Endothelial cell of umbilical vein (primary cell): ENCODE measurements at regions of chr11 and their contacts with region 1.

Region 1: GRCh38 chr11:65569973-65570918 is at the start of gene ZNRD2:
- DNase-seq: peak; percentile 99
- H3K4me3 ChIP-seq: peak within 1 kb of the TSS; percentile 55 to 66 (median 63)
- H3K27ac ChIP-seq: peak within 1 kb of the TSS; percentile 61
- H3K4me1 ChIP-seq: peaks cover 51% of the 10 kb centered on the region
- H3K27me3 ChIP-seq: no peaks in the 10 kb centered on the region
- CTCF ChIP-seq: peak; percentile 29 to 47
- POLR2A ChIP-seq: peak; percentile 84
- total RNA-seq, gene ZNRD2: 40.8 and 46.9 TPM in 2 replicates

Region 2: DNA sequence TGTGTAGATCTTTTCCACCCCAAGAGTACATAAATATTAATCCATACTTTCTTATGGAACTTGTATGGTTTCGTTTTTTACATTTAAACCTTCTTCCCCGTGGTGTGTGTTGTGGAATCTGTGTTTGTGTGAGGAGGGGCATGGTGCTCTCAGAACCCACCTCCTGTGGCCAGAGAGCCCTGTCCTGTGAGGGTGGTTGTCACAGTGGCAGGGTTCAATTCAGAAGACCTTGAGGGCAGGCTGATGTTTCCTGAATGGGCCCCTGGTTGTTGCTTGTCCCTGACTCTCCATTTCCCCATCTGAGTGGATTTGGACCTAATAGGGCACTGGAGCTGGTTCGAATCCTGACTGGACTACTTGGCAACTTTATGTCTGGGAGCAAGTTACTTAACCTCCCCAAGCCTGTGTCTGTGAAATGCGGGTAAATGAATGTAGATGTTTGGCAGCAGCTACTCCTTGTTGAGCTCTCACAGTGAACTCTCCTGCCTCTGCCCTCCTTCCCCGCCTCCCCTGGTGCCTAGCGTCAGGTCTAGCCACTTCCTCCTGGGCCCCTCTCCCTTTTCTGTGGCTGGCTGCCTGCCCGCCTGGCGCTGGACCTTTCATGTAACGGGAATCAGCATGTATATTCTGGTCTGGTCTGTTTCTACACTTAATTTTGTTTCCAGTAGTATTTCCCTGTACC is 140.4 kb before region 1 on chr11:
- CTCF ChIA-PET with region 1: no interaction called
- POLR2A ChIA-PET with region 1: no interaction called
- dilution Hi-C with region 1: no loop called
- intact Hi-C with region 1: no loop called
- DNase-seq: peak; percentile 79
- H3K4me3 ChIP-seq: peak overlapping the region in 2 of 3 experiments; percentile 16 to 95
- H3K27ac ChIP-seq: peak overlapping the region; percentile 45
- H3K4me1 ChIP-seq: peaks cover 45% of the 10 kb centered on the region
- H3K27me3 ChIP-seq: no peaks in the 10 kb centered on the region
- CTCF ChIP-seq: no peak
- POLR2A ChIP-seq: no peak

Region 3: DNA sequence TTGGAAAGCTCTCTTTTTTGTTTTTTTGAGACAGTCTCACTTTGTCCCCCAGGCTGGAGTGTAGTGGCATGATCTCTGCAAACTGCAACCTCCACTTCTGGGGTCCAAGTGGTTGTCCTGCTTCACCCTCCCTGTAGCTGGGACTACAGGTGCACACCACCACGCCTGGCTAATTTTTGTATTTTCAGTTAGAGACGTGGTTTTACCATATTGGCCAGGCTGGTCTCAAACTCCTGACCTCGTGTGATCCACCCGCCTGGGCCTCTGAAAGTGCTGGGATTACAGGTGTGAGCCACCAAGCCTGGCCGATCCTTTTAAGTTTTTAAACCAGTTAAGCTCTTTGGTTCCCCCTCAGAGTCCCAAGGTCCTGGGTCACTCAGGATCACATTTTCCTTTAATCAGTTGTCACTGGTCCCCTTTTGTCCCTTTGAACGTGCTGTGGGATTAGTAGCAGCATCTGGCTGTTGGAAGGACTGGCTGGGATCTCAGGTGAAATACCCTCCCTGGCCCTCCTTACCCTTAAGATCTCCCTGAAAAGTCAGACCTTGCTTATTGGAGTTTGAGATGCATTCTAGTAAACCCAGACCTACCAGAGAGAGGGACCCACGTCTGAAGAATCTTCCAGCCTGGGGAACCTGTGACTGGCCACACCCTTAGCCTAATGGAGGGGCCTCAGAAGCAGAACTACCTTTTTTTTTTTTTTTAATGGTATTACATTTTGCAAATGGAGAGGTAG is 63.3 kb before region 1 on chr11:
- CTCF ChIA-PET with region 1: no interaction called
- POLR2A ChIA-PET with region 1: interaction called, 10 read pairs
- dilution Hi-C with region 1: no loop called
- intact Hi-C with region 1: no loop called
- DNase-seq: peak; percentile 61
- H3K4me3 ChIP-seq: peak overlapping the region in 2 of 3 experiments; percentile 91 to 98
- H3K27ac ChIP-seq: peak overlapping the region; percentile 89
- H3K4me1 ChIP-seq: peaks cover 24% of the 10 kb centered on the region
- H3K27me3 ChIP-seq: no peaks in the 10 kb centered on the region
- CTCF ChIP-seq: no peak
- POLR2A ChIP-seq: peak; percentile 87

Region 4: DNA sequence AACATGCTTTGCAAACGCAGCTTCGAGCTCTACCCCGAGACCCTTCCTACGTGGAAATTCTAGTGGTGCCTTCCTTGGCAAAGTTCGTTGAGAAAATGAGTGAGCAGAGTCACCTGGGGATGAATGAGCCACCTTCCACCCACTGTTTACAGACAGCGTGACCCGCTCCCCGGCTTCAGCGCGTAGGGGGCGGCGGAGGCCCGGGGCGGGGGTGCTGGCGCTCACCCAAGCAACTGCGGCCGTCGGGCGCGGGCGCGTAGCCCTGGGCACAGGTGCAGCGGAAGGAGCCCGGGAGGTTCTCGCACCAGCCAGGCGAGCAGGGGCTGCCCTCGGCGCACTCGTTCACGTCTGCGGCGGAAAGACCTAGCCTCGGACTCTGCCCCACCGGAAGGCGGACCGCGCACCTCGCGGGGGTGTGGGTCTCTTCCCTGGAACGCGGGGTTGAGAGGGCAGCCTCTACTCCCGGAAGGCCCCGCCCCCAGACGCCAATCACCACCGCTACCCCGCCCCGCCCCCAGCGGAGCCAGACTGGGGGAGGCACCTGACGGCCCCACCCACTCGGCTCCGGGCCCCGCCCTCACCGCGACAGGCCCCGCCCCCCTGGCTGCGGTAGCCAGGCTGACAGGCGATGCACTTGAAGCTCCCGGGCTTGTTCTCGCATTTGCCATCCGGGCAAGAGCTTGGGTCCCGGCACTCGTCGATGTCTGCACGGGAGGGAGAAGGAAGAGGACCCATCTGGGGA is 23.9 kb before region 1 on chr11:
- CTCF ChIA-PET with region 1: interaction called, 146 read pairs
- POLR2A ChIA-PET with region 1: no interaction called
- dilution Hi-C with region 1: no loop called
- intact Hi-C with region 1: loop called (anchors 2 kb)
- DNase-seq: peak; percentile 44
- H3K4me3 ChIP-seq: no peak overlapping the region
- H3K27ac ChIP-seq: no peak overlapping the region
- H3K4me1 ChIP-seq: peaks cover 1% of the 10 kb centered on the region
- H3K27me3 ChIP-seq: no peaks in the 10 kb centered on the region
- CTCF ChIP-seq: no peak
- POLR2A ChIP-seq: no peak

Region 5: GRCh38 chr11:65558002-65558931 is 12.0 kb before region 1 on chr11 and contains the start of gene LTBP3:
- CTCF ChIA-PET with region 1: interaction called, 32 read pairs
- POLR2A ChIA-PET with region 1: interaction called, 3 read pairs
- dilution Hi-C with region 1: no loop called
- intact Hi-C with region 1: loop called (anchors 1 kb)
- DNase-seq: peak; percentile 84
- H3K4me3 ChIP-seq: peak within 1 kb of the TSS; percentile 25 to 52 (median 48)
- H3K27ac ChIP-seq: peak within 1 kb of the TSS; percentile 78
- H3K4me1 ChIP-seq: peaks cover 60% of the 10 kb centered on the region
- H3K27me3 ChIP-seq: no peaks in the 10 kb centered on the region
- CTCF ChIP-seq: no peak
- POLR2A ChIP-seq: peak; percentile 62
- total RNA-seq, gene LTBP3: 120 and 121 TPM in 2 replicates

Region 6: GRCh38 chr11:65593518-65594298 is 23.5 kb after region 1 on chr11:
- CTCF ChIA-PET with region 1: interaction called, 167 read pairs
- POLR2A ChIA-PET with region 1: no interaction called
- dilution Hi-C with region 1: no loop called
- intact Hi-C with region 1: loop called (anchors 1 kb)
- DNase-seq: peak; percentile 34
- H3K4me3 ChIP-seq: no peak overlapping the region
- H3K27ac ChIP-seq: no peak overlapping the region
- H3K4me1 ChIP-seq: peaks cover 7% of the 10 kb centered on the region
- H3K27me3 ChIP-seq: no peaks in the 10 kb centered on the region
- CTCF ChIP-seq: peak; percentile 61 to 76
- POLR2A ChIP-seq: no peak

Region 7: DNA sequence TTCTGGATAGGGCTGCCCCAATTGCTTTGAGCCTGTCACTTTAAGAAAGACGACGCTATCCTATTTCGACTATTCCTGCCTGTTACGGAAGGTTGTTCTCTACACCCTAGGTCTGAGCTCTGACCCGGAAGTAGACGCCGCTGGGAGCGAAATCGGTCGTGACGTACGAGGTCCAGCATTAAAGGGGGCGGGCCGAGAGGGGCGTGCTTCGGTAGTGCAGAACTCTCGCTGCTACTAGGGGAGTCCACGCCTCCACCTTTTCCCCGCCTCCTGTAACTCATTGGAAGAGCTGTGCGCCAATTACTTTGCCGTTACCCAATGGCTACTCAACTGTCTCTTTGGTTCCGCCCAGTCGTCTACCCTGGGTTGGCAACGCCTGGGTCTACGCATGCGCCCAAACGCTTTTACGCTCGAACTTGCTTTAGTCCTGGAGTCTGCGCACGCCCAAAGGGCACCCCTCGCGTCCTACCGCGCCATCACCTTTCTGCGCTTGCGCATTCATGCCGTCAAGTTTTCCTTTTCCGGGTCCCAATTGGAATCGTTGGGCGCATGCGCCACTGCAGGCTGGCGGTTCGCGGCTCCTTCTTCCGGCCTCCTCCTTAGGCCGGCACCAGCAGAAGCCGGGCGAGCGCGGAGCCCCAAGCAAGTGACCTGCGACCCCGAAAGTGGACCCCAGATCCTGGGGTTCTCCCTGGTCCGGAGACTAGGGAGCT is 45.1 kb after region 1 on chr11 and contains the start of gene PCNX3:
- CTCF ChIA-PET with region 1: interaction called, 10 read pairs
- POLR2A ChIA-PET with region 1: no interaction called
- dilution Hi-C with region 1: no loop called
- intact Hi-C with region 1: loop called (anchors 1 kb)
- DNase-seq: peak; percentile 100
- H3K4me3 ChIP-seq: peak within 1 kb of the TSS; percentile 81 to 90 (median 87)
- H3K27ac ChIP-seq: peak within 1 kb of the TSS; percentile 88
- H3K4me1 ChIP-seq: peaks cover 39% of the 10 kb centered on the region
- H3K27me3 ChIP-seq: no peaks in the 10 kb centered on the region
- CTCF ChIP-seq: no peak
- POLR2A ChIP-seq: peak; percentile 59
- total RNA-seq, gene PCNX3: 53.8 and 53.9 TPM in 2 replicates

Region 8: GRCh38 chr11:65900125-65900898 is 330.1 kb after region 1 on chr11 and contains the start of gene FOSL1:
- CTCF ChIA-PET with region 1: no interaction called
- POLR2A ChIA-PET with region 1: no interaction called
- dilution Hi-C with region 1: no loop called
- intact Hi-C with region 1: no loop called
- DNase-seq: peak; percentile 94
- H3K4me3 ChIP-seq: peak within 1 kb of the TSS; percentile 58 to 79 (median 69)
- H3K27ac ChIP-seq: peak within 1 kb of the TSS; percentile 87
- H3K4me1 ChIP-seq: peaks cover 40% of the 10 kb centered on the region
- H3K27me3 ChIP-seq: no peaks in the 10 kb centered on the region
- CTCF ChIP-seq: no peak
- POLR2A ChIP-seq: peak; percentile 99
- total RNA-seq, gene FOSL1: 52.6 and 53.8 TPM in 2 replicates